A673 (cell line): ENCODE measurements at regions of chrX and their contacts with region 1.

Region 1: GRCh38 chrX:153801722-153802121 is 7.3 kb downstream of the SSR4 start:
- DNase-seq: no peak
- H3K4me3 ChIP-seq: no peak overlapping the region
- H3K27ac ChIP-seq: no peak overlapping the region
- H3K4me1 ChIP-seq: no peaks in the 10 kb centered on the region
- H3K27me3 ChIP-seq: no peaks in the 10 kb centered on the region
- CTCF ChIP-seq: no peak

Region 2: GRCh38 chrX:153560000-153560399 is 241.7 kb before region 1 on chrX:
- CTCF ChIA-PET with region 1: no interaction called
- POLR2A ChIA-PET with region 1: interaction called, 10 read pairs
- intact Hi-C with region 1: no loop called
- DNase-seq: no peak
- H3K4me3 ChIP-seq: no peak overlapping the region
- H3K27ac ChIP-seq: no peak overlapping the region
- H3K4me1 ChIP-seq: no peaks in the 10 kb centered on the region
- H3K27me3 ChIP-seq: no peaks in the 10 kb centered on the region
- CTCF ChIP-seq: no peak

Region 3: DNA sequence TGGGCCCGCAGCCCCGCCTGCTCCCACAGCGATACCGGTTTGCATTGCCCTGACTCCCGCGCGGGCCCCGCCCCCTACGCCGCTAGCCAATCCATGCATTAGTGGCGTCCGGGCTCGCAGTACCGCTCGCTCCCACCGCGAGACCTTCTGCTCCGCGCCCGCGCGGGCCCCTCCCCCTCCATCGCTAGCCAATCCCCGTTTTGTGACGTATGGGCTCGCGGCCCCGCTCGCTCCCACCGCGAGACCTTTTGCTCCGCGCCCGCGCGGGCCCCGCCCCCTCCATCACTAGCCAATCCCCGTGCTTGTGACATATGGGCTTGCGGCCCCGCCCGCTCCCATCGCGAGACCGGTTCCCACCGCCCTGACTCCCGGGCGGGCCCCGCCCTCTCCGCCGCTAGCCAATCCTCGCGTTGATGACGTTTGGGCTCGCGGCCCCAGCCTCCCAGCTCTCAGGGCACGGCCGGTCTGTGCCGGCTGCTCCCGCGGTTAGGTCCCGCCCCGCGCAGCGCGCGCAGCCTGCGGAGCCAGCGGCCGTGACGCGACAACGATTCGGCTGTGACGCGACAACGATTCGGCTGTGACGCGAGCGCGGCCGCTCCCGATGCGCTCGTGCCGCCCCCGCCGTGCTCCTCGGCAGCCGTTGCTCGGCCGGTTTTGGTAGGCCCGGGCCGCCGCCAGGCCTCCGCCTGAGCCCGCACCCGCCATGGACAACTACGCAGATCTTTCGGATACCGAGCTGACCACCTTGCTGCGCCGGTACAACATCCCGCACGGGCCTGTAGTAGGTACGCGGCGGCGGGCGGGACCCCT is 577.3 kb after region 1 on chrX and contains the start of gene EMD:
- CTCF ChIA-PET with region 1: no interaction called
- POLR2A ChIA-PET with region 1: no interaction called
- intact Hi-C with region 1: no loop called
- DNase-seq: peak; percentile 98
- H3K4me3 ChIP-seq: peak within 1 kb of the TSS; percentile 96
- H3K27ac ChIP-seq: peak within 1 kb of the TSS; percentile 100
- H3K4me1 ChIP-seq: no peaks in the 10 kb centered on the region
- H3K27me3 ChIP-seq: no peaks in the 10 kb centered on the region
- CTCF ChIP-seq: no peak
- total RNA-seq, gene EMD: 79.6 and 84.7 TPM in 2 replicates